Ascending aorta (tissue), 2 donors: ENCODE measurements at regions of chr16 and their contacts with region 1.

Region 1: DNA sequence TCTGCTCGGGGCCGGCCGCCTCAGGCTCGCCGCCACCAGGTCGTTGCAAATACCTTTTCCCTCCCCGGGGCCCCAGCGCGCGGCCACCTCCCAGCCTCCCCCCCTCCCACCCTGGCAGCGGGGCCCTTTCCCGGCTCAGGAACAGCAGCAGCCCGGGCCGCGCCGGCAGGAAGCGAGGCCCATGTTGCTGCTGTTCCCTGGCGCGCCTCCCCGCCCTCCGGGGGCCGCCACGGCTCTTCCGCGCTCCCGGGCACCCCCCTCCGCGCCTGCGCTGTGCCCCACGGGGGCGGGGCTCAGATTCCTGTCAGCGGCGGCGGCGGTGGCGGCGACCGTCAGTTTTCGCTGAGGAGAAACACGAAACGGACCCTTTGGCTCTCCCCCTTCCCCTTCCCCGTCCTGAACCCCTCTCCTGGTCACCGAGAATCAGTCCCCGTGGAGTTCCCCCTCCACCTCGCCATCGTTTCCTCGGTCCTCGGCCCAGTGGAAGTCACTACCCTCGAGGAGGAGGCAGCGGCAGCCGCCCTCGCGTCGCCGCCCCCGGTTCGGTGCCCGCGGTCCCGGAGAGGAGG is at the start of gene NFAT5:
- DNase-seq: peak; percentile 46 to 94
- H3K4me3 ChIP-seq: peak within 1 kb of the TSS; percentile 87 to 95
- H3K27ac ChIP-seq: peak within 1 kb of the TSS; percentile 98 to 99
- H3K4me1 ChIP-seq: peaks cover 23 to 30% of the 10 kb centered on the region in 2 donors
- H3K27me3 ChIP-seq: no peaks in the 10 kb centered on the region
- CTCF ChIP-seq: peak in 1 of 3 experiments; percentile 20
- total RNA-seq, gene NFAT5: 48.9 TPM

Region 2: DNA sequence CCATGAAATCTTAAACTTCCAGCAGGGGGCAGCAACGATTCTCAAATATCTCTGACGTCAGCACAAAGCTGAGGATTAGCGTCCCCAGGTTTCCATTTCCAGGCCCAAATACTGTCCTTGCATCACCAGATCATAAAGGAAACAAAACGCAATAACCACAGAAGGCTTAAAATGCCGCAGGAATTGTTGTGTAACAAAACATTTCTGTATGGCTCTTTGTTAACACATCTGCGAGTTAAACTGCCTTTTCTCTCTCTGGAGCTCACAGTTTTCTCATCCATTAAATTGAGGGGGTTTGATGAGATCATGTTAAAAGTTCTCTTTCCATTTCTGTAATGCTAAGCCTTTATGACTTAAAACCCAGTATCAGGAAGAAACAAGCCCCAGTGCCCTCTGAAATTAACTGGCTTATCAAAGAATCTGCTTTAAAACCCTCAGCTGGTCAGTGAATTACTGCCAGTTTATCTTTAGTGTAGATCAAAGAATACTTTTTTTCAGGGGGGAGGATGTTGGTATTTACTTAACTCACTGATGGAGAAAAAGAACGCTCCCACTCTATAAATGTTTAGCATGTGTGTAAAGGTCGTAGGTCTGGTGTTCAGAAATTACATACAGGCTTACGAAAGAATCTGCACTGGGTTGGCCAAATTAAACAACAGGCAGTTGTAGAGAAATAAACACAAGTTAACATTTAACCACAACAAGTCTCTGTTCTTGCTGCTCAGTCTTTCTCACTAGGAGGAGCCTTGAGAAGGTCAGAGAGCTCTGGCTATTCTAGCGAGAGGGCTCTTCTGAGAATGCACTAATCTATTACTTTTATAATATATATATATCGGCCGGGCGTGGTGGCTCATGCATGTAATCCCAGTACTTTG is 169.3 kb before region 1 on chr16:
- intact Hi-C with region 1: loop called (anchors 2 kb)
- DNase-seq: peak in 1 of 2 donors; percentile 91
- H3K4me3 ChIP-seq: peak overlapping the region in 1 of 2 donors; percentile 31
- H3K27ac ChIP-seq: peak overlapping the region; percentile 45 to 68
- H3K4me1 ChIP-seq: peaks cover 0 to 10% of the 10 kb centered on the region in 2 donors
- H3K27me3 ChIP-seq: no peaks in the 10 kb centered on the region
- CTCF ChIP-seq: peak; percentile 65 to 79 (median 71)

Region 3: GRCh38 chr16:69424053-69424934 is 141.5 kb before region 1 on chr16 and contains the start of gene CYB5B:
- intact Hi-C with region 1: loop called (anchors 1 kb)
- DNase-seq: peak; percentile 89 to 97
- H3K4me3 ChIP-seq: peak within 1 kb of the TSS; percentile 80 to 93
- H3K27ac ChIP-seq: peak within 1 kb of the TSS; percentile 65 to 85
- H3K4me1 ChIP-seq: no peaks in the 10 kb centered on the region
- H3K27me3 ChIP-seq: no peaks in the 10 kb centered on the region
- CTCF ChIP-seq: no peak
- total RNA-seq, gene CYB5B: 19.2 TPM

Region 4: GRCh38 chr16:69482410-69482991 is 83.3 kb before region 1 on chr16:
- intact Hi-C with region 1: loop called (anchors 1 kb)
- DNase-seq: peak in 1 of 2 donors; percentile 79
- H3K4me3 ChIP-seq: peak overlapping the region in 1 of 2 donors; percentile 55
- H3K27ac ChIP-seq: peak overlapping the region; percentile 85 to 88
- H3K4me1 ChIP-seq: peaks cover 2 to 13% of the 10 kb centered on the region in 2 donors
- H3K27me3 ChIP-seq: no peaks in the 10 kb centered on the region
- CTCF ChIP-seq: no peak

Region 5: GRCh38 chr16:69532641-69533459 is 32.9 kb before region 1 on chr16:
- intact Hi-C with region 1: loop called (anchors 5 kb)
- DNase-seq: no peak
- H3K4me3 ChIP-seq: no peak overlapping the region
- H3K27ac ChIP-seq: no peak overlapping the region
- H3K4me1 ChIP-seq: peaks cover 0 to 5% of the 10 kb centered on the region in 2 donors
- H3K27me3 ChIP-seq: no peaks in the 10 kb centered on the region
- CTCF ChIP-seq: no peak

Region 6: DNA sequence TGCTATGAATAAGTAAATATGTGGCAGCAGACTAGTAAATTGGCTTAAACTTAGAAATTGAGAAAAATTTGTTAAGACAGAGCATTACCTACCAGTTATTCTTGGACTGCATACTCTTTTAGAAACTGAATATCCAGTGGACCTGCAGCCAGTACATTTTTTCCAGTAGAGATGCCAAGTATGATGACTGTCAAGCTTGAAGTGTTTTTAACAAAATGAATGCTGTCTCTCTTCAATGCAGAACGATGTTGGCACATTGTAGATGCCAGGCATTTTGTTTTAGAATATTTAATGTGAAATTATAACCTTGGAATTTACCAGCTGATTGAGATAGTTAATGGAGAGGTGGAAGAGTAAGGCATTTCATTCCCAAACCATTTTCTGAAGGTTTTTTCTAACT is 52.6 kb after region 1 on chr16:
- intact Hi-C with region 1: loop called (anchors 5 kb)
- DNase-seq: no peak
- H3K4me3 ChIP-seq: peak overlapping the region in 1 of 2 donors; percentile 8
- H3K27ac ChIP-seq: peak overlapping the region; percentile 52 to 64
- H3K4me1 ChIP-seq: peaks cover 0 to 36% of the 10 kb centered on the region in 2 donors
- H3K27me3 ChIP-seq: no peaks in the 10 kb centered on the region
- CTCF ChIP-seq: no peak

Region 7: GRCh38 chr16:69660166-69660565 is 94.4 kb after region 1 on chr16:
- intact Hi-C with region 1: no loop called
- DNase-seq: no peak
- H3K4me3 ChIP-seq: no peak overlapping the region
- H3K27ac ChIP-seq: no peak overlapping the region
- H3K4me1 ChIP-seq: no peaks in the 10 kb centered on the region
- H3K27me3 ChIP-seq: no peaks in the 10 kb centered on the region
- CTCF ChIP-seq: no peak

Region 8: GRCh38 chr16:69754469-69755310 is 188.9 kb after region 1 on chr16 and contains the start of gene NOB1:
- intact Hi-C with region 1: loop called (anchors 10 kb)
- DNase-seq: peak; percentile 81 to 97
- H3K4me3 ChIP-seq: peak within 1 kb of the TSS; percentile 65 to 68
- H3K27ac ChIP-seq: peak within 1 kb of the TSS; percentile 15 to 59
- H3K4me1 ChIP-seq: peaks cover 5 to 19% of the 10 kb centered on the region in 2 donors
- H3K27me3 ChIP-seq: no peaks in the 10 kb centered on the region
- CTCF ChIP-seq: peak; percentile 93 to 100 (median 97)
- total RNA-seq, gene NOB1: 20.2 TPM